Left cardiac atrium (tissue), 4 donors: ENCODE measurements at regions of chr16 and their contacts with region 1.

Region 1: GRCh38 chr16:15765880-15766279 is 90.9 kb downstream of the MYH11 start:
- DNase-seq: no peak
- ATAC-seq: peak; percentile 58 to 76

Region 2: GRCh38 chr16:15822957-15823356 is 57.1 kb after region 1 on chr16:
- intact Hi-C with region 1: loop called (anchors 5 to 10 kb)
- DNase-seq: no peak
- ATAC-seq: peak; percentile 18 to 27